Caco-2 (cell line): ENCODE measurements at regions of chr16 and their contacts with region 1.

Region 1: GRCh38 chr16:234468-235305 is at the start of gene FAM234A:
- DNase-seq: peak; percentile 93 to 96
- H3K4me3 ChIP-seq: peak within 1 kb of the TSS; percentile 53
- H3K4me3 Mint-ChIP-seq: peak within 1 kb of the TSS; percentile 76
- H3K27ac Mint-ChIP-seq: peak within 1 kb of the TSS; percentile 92
- H3K4me1 ChIP-seq: no peaks in the 10 kb centered on the region
- H3K4me1 Mint-ChIP-seq: no peaks in the 10 kb centered on the region
- H3K27me3 ChIP-seq: no peaks in the 10 kb centered on the region
- H3K27me3 Mint-ChIP-seq: no peaks in the 10 kb centered on the region
- CTCF ChIP-seq: peak; percentile 41 to 43
- total RNA-seq, gene FAM234A: 71.7 and 77.7 TPM in 2 replicates

Region 2: GRCh38 chr16:278863-279366 is 44.2 kb after region 1 on chr16:
- CTCF ChIA-PET with region 1: interaction called, 3 read pairs
- POLR2A ChIA-PET with region 1: interaction called, 12 read pairs
- intact Hi-C with region 1: no loop called
- DNase-seq: peak in 1 of 2 experiments; percentile 33
- H3K4me3 ChIP-seq: no peak overlapping the region
- H3K4me3 Mint-ChIP-seq: no peak overlapping the region
- H3K27ac Mint-ChIP-seq: no peak overlapping the region
- H3K4me1 ChIP-seq: no peaks in the 10 kb centered on the region
- H3K4me1 Mint-ChIP-seq: no peaks in the 10 kb centered on the region
- H3K27me3 ChIP-seq: no peaks in the 10 kb centered on the region; the same call in 1 of the 2 replicates
- H3K27me3 Mint-ChIP-seq: no peaks in the 10 kb centered on the region
- CTCF ChIP-seq: no peak

Region 3: GRCh38 chr16:502179-502943 is 267.7 kb after region 1 on chr16:
- CTCF ChIA-PET with region 1: no interaction called
- POLR2A ChIA-PET with region 1: no interaction called
- intact Hi-C with region 1: no loop called
- DNase-seq: peak; percentile 70 to 84
- H3K4me3 ChIP-seq: peak overlapping the region; percentile 27; the same call in 1 of the 2 replicates
- H3K4me3 Mint-ChIP-seq: peak overlapping the region; percentile 22
- H3K27ac Mint-ChIP-seq: peak overlapping the region; percentile 86
- H3K4me1 ChIP-seq: peaks cover 17% of the 10 kb centered on the region
- H3K4me1 Mint-ChIP-seq: peaks cover 8% of the 10 kb centered on the region
- H3K27me3 ChIP-seq: no peaks in the 10 kb centered on the region
- H3K27me3 Mint-ChIP-seq: no peaks in the 10 kb centered on the region
- CTCF ChIP-seq: no peak